ENCODE measurements at regions of chr6 and their contacts with region 1.

Region 1: DNA sequence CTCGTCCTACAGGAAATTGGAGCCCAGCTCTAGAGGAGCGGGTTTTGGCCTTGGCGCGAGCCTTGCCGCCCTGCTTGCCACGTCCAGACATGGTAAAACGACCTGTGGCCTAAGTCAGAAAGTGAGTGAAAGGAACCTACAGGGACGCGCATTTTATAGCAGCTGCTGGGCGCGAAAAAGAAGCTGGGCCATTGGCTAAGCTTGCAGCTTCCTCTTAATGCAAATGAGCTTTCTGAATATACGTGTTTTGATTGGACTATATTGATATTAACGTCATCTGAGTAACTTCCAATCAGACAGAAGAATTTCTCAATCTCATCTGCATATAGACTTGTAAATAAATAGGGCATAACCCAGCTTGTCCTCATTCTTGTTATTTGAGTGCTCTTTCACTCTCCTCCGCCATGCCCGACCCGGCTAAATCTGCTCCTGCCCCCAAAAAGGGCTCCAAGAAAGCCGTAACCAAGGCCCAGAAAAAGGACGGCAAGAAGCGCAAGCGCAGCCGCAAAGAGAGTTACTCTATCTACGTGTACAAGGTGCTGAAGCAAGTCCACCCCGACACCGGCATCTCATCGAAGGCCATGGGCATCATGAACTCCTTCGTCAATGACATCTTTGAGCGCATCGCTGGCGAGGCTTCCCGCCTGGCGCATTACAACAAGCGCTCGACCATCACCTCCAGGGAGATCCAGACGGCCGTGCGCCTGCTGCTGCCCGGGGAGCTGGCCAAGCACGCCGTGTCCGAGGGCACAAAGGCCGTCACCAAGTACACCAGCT is 18.9 kb downstream of the OR2B2 start:
- DNase-seq: peak; percentile 98
- H3K4me3 ChIP-seq: peak overlapping the region; percentile 70
- H3K27me3 ChIP-seq: no peaks in the 10 kb centered on the region
- CTCF ChIP-seq: no peak

Region 2: DNA sequence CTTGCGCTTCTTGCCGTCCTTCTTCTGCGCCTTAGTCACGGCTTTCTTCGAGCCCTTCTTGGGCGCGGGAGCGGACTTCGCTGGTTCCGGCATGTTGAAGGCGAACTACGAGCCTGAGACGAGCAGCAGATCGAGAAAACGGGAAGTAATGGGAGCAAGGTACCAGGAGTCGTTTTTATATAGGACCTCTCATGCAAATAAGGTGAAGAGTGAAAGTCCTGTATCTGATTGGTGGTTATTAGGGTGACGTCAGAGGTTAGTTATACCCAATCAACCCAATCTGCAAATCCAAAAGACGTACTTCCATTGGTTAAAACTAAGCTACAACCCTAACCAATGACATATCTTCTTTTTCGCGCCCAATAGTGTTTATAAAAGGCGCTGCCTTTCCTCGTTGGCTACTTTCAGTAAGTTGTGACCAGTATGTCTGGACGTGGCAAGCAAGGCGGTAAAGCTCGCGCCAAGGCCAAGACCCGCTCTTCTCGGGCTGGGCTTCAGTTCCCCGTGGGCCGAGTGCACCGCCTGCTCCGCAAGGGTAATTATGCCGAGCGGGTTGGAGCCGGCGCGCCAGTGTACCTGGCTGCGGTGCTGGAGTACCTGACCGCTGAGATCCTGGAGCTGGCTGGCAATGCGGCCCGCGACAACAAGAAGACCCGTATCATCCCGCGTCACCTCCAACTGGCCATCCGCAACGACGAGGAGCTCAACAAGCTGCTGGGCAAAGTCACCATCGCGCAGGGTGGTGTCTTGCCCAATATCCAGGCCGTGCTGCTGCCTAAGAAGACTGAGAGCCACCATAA is 746.3 kb before region 1 on chr6:
- CTCF ChIA-PET with region 1: interaction called, 4 read pairs
- POLR2A ChIA-PET with region 1: interaction called, 36 read pairs
- DNase-seq: peak; percentile 100
- H3K4me3 ChIP-seq: peak overlapping the region; percentile 63
- H3K27me3 ChIP-seq: no peaks in the 10 kb centered on the region
- CTCF ChIP-seq: no peak

Region 3: DNA sequence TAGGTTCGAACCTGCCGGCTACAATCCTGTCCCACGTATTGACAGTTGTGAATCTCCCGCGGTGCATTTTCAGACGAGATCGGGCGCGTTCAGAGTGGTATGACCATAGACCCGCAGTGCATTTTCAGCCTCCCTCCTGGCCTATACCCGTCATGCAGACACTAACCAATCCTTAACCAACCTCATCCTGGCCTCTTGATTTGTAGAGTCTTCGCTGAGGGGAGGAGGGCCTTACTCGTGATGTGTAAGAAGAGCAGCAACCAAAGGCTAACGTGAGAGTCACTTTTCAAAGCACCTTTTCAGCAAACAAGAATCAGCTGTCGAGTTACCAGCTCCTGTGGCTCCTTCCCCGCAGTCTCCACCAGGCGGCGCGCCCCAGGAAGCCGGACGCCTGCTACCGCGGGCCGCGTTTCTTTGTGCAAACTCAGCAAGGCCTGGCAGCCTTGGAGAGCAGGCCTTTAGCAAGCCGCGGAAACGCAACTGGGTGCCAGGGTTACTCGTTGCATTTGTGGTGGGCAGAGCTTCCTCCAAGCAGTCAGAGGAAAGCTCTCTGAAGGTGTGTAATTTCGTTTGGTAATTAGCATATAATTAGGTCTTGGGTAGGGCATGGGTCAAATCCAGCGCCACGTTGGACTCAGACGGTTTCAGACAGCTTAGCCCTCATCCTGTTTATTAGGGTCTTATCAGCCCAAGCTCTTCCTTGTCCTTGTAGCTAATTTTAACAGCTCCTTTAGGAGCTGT is 120.8 kb before region 1 on chr6:
- CTCF ChIA-PET with region 1: interaction called, 70 read pairs
- POLR2A ChIA-PET with region 1: no interaction called
- DNase-seq: no peak
- H3K4me3 ChIP-seq: no peak overlapping the region
- H3K27me3 ChIP-seq: no peaks in the 10 kb centered on the region
- CTCF ChIP-seq: peak; percentile 98

Region 4: GRCh38 chr6:27809939-27810767 is 83.1 kb before region 1 on chr6:
- CTCF ChIA-PET with region 1: interaction called, 37 read pairs
- POLR2A ChIA-PET with region 1: interaction called, 16 read pairs
- DNase-seq: peak; percentile 92
- H3K4me3 ChIP-seq: peak overlapping the region; percentile 75
- H3K27me3 ChIP-seq: no peaks in the 10 kb centered on the region
- CTCF ChIP-seq: peak; percentile 28

Region 5: DNA sequence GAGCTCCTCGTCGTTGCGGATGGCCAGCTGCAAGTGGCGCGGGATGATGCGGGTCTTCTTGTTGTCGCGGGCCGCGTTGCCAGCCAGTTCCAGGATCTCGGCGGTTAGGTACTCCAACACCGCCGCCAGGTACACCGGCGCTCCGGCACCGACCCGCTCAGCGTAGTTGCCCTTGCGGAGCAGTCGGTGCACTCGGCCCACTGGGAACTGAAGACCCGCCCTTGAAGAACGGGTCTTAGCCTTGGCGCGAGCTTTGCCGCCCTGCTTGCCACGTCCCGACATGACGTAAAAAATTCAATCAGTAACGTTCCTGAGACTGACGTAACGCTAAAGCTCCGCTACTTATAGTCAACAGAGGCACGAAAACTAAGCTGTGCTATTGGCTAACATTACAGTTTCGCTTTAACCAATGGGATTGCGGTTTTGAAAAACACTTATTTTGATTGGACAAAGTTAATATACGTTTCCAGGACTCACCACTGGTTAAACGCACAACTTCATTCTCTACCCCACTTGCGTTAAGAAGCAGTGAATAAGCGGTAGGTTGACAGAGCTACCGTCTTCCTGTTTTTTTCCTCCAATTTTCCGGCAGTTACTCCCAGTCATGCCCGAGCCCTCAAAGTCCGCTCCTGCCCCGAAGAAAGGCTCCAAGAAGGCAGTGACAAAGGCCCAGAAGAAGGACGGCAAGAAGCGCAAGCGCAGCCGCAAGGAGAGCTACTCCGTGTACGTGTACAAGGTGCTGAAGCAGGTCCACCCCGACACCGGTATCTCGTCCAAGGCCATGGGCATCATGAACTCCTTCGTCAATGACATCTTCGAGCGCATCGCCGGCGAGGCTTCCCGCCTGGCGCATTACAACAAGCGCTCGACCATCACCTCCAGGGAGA is 54.9 kb before region 1 on chr6:
- CTCF ChIA-PET with region 1: interaction called, 32 read pairs
- POLR2A ChIA-PET with region 1: interaction called, 18 read pairs
- DNase-seq: peak; percentile 99
- H3K4me3 ChIP-seq: peak overlapping the region; percentile 60
- H3K27me3 ChIP-seq: no peaks in the 10 kb centered on the region
- CTCF ChIP-seq: no peak

Region 6: DNA sequence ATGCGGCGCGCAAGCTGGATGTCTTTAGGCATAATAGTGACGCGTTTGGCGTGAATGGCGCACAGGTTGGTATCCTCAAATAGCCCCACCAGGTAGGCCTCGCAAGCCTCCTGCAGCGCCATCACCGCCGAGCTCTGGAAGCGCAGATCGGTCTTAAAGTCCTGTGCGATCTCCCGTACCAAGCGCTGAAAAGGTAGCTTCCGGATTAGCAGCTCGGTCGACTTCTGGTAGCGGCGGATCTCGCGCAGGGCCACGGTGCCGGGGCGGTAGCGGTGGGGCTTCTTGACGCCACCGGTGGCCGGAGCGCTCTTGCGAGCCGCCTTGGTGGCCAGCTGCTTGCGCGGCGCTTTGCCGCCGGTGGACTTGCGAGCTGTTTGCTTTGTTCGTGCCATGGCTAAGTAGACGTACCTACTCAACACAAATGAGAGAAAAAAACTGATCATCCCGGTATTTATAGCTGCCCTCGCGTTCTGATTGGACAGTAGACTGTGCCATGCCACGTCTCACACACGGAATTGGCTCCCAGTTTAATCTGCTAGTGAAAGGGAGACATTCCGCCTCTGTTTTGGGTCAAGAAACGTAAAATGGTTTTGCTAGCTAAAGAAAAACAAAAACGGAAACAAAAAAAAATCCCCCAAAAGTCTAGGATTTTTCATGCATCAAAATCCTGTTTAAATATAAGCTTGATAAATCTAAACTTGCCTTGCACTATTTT is 21.2 kb before region 1 on chr6:
- CTCF ChIA-PET with region 1: interaction called, 9 read pairs
- POLR2A ChIA-PET with region 1: interaction called, 28 read pairs
- DNase-seq: peak; percentile 90
- H3K4me3 ChIP-seq: peak overlapping the region; percentile 50
- H3K27me3 ChIP-seq: no peaks in the 10 kb centered on the region
- CTCF ChIP-seq: peak; percentile 30

Region 7: DNA sequence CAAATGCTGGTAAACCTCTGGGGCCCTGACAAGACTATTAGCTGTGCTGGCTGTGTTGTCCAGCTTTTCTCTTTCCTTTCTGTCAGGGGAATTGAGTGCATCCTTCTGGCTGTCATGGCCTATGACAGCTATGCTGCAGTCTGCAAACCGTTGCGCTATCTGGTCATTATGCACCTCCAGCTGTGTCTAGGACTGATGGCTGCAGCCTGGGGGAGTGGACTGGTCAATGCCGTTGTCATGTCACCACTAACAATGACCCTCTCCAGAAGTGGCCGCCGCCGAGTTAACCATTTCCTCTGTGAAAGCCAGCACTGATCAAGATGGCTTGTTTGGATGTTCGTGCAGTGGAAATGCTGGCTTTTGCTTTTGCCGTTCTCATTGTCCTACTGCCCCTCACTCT is 84.1 kb after region 1 on chr6:
- CTCF ChIA-PET with region 1: no interaction called
- POLR2A ChIA-PET with region 1: no interaction called
- DNase-seq: no peak
- H3K4me3 ChIP-seq: no peak overlapping the region
- H3K27me3 ChIP-seq: no peaks in the 10 kb centered on the region
- CTCF ChIP-seq: no peak